ENCODE measurements at regions of chr7 and their contacts with region 1.

Region 1: GRCh38 chr7:16078076-16078952 is 343.0 kb downstream of the CRPPA start:
- DNase-seq: no peak
- H3K4me3 ChIP-seq: no peak overlapping the region
- H3K27ac ChIP-seq: no peak overlapping the region
- H3K4me1 ChIP-seq: peaks cover 0 to 5% (median 0%) of the 10 kb centered on the region in 4 donors
- H3K27me3 ChIP-seq: no peaks in the 10 kb centered on the region
- CTCF ChIP-seq: peak; percentile 60 to 71 (median 65)
- EP300 ChIP-seq: no peak
- POLR2A ChIP-seq: no peak

Region 2: DNA sequence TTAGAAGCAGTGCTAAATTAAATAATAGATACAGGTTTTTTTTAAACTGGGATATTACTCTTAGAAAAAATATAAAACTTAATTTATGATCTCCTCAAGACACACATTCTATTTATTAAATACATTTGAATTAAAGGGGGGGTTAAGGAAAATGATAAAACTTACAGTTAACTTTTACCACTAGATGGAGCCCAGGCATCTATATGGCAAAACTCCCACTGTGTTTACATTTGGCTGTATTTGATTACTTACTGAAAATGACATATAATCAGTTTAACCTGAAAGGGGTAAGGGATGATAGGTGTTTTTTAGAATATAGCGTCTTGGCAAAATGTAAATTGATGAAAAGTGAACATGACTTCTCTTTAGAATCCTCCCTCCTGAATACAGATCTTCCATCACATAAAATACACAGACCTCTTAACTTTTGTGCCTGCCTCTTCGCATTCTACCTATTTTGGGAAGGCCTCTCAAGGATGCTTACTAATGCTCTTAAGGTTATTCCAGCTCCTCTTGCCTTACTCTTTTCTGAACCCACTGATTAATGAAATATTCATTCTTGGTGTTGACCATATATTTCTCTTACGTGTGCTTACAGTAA is 752.2 kb before region 1 on chr7:
- intact Hi-C with region 1: loop called (anchors 5 kb)
- DNase-seq: no peak
- H3K4me3 ChIP-seq: no peak overlapping the region
- H3K27ac ChIP-seq: no peak overlapping the region
- H3K4me1 ChIP-seq: peaks cover 0 to 9% (median 2%) of the 10 kb centered on the region in 4 donors
- H3K27me3 ChIP-seq: no peaks in the 10 kb centered on the region
- CTCF ChIP-seq: peak; percentile 46 to 63 (median 59)
- EP300 ChIP-seq: no peak
- POLR2A ChIP-seq: no peak

Region 3: GRCh38 chr7:16347827-16348192 is 269.5 kb after region 1 on chr7:
- intact Hi-C with region 1: no loop called
- DNase-seq: no peak
- H3K4me3 ChIP-seq: no peak overlapping the region
- H3K27ac ChIP-seq: no peak overlapping the region
- H3K4me1 ChIP-seq: peaks cover 0 to 5% (median 0%) of the 10 kb centered on the region in 4 donors
- H3K27me3 ChIP-seq: no peaks in the 10 kb centered on the region
- CTCF ChIP-seq: no peak
- EP300 ChIP-seq: no peak
- POLR2A ChIP-seq: no peak

Measured in esophagus muscularis mucosa (tissue), 4 donors.